CD4-positive, alpha-beta memory T cell (primary cell): ENCODE measurements at regions of chr16 and their contacts with region 1.

Region 1: GRCh38 chr16:58755989-58756649 is 22.0 kb upstream of the GOT2 start:
- DNase-seq: peak; percentile 75 to 85 (median 76)
- H3K4me3 ChIP-seq: peak overlapping the region in 1 of 2 donors; percentile 5
- H3K4me3 Mint-ChIP-seq: peak overlapping the region; percentile 22 to 81 (median 76)
- H3K27ac ChIP-seq: peak overlapping the region; percentile 25
- H3K27ac Mint-ChIP-seq: peak overlapping the region; percentile 63 to 95 (median 88)
- H3K4me1 ChIP-seq: peaks cover 8% of the 10 kb centered on the region
- H3K4me1 Mint-ChIP-seq: peaks cover 8 to 11% (median 10%) of the 10 kb centered on the region in 4 donors
- H3K27me3 ChIP-seq: no peaks in the 10 kb centered on the region
- H3K27me3 Mint-ChIP-seq: no peaks in the 10 kb centered on the region

Region 2: GRCh38 chr16:58025351-58026138 is 730.6 kb before region 1 on chr16 and contains the start of gene MMP15:
- CTCF ChIA-PET with region 1: no interaction called
- POLR2A ChIA-PET with region 1: no interaction called
- intact Hi-C with region 1: loop called (anchors 10 kb)
- DNase-seq: peak; percentile 50 to 77 (median 56)
- H3K4me3 ChIP-seq: peak within 1 kb of the TSS; percentile 11 to 53
- H3K4me3 Mint-ChIP-seq: peak within 1 kb of the TSS; percentile 89 to 99 (median 93)
- H3K27ac ChIP-seq: peak within 1 kb of the TSS; percentile 34
- H3K27ac Mint-ChIP-seq: peak within 1 kb of the TSS; percentile 81 to 93 (median 91)
- H3K4me1 ChIP-seq: peaks cover 19% of the 10 kb centered on the region
- H3K4me1 Mint-ChIP-seq: peaks cover 6 to 29% (median 18%) of the 10 kb centered on the region in 4 donors
- H3K27me3 ChIP-seq: no peaks in the 10 kb centered on the region
- H3K27me3 Mint-ChIP-seq: peaks cover 0 to 1% of the 10 kb centered on the region in 2 donors
- total RNA-seq, gene MMP15: 1.6 to 1.8 TPM

Region 3: DNA sequence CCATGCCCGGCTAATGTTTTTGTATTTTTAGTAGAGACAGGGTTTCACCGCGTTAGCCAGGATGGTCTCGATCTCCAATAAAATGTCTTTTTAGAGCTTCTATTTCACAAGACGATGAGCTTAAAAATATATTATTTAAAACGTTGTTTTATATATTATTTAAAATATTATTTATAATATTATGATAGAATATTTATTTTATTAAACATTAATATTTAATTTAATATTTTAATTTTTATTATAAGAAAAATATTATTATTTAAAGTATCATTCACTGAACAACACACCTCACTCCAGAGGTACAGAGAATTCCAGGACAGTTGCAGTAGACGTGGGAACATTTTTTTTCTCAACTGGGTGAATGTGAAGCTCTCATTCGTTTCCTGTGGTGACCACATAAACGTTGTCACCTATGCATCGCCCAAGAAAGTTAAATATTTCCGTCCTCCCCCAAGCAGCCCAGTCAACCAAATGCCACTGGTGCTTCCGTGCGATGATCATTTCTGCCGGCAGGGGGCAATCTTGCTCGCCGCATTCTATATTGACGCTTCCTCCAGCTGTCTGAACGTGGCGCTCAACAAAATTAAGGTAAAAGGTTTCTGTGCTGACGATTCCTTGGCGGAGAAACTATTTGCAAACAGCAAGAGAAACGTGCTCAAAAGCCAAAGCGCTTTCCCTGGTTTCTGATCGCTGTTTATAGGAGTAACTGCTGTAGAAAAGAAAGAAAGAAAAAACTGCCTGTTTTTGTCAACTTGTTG is 419.6 kb before region 1 on chr16:
- CTCF ChIA-PET with region 1: interaction called, 108 read pairs
- POLR2A ChIA-PET with region 1: interaction called, 7 read pairs
- intact Hi-C with region 1: loop called (anchors 1 kb)
- DNase-seq: peak; percentile 74 to 78 (median 75)
- H3K4me3 ChIP-seq: no peak overlapping the region
- H3K4me3 Mint-ChIP-seq: peak overlapping the region in 5 of 8 donors; percentile 24 to 74 (median 57)
- H3K27ac ChIP-seq: no peak overlapping the region
- H3K27ac Mint-ChIP-seq: no peak overlapping the region
- H3K4me1 ChIP-seq: no peaks in the 10 kb centered on the region
- H3K4me1 Mint-ChIP-seq: peaks cover 0 to 7% (median 6%) of the 10 kb centered on the region in 4 donors
- H3K27me3 ChIP-seq: no peaks in the 10 kb centered on the region
- H3K27me3 Mint-ChIP-seq: peaks cover 8 to 11% of the 10 kb centered on the region in 2 donors

Region 4: GRCh38 chr16:58487566-58488351 is 268.4 kb before region 1 on chr16:
- CTCF ChIA-PET with region 1: interaction called, 12 read pairs
- POLR2A ChIA-PET with region 1: no interaction called
- intact Hi-C with region 1: no loop called
- DNase-seq: peak; percentile 59 to 71 (median 62)
- H3K4me3 ChIP-seq: no peak overlapping the region
- H3K4me3 Mint-ChIP-seq: peak overlapping the region in 3 of 8 donors; percentile 20 to 39 (median 26)
- H3K27ac ChIP-seq: no peak overlapping the region
- H3K27ac Mint-ChIP-seq: no peak overlapping the region
- H3K4me1 ChIP-seq: no peaks in the 10 kb centered on the region
- H3K4me1 Mint-ChIP-seq: peaks cover 0 to 3% (median 0%) of the 10 kb centered on the region in 4 donors
- H3K27me3 ChIP-seq: no peaks in the 10 kb centered on the region
- H3K27me3 Mint-ChIP-seq: peaks cover 4 to 8% of the 10 kb centered on the region in 2 donors

Region 5: DNA sequence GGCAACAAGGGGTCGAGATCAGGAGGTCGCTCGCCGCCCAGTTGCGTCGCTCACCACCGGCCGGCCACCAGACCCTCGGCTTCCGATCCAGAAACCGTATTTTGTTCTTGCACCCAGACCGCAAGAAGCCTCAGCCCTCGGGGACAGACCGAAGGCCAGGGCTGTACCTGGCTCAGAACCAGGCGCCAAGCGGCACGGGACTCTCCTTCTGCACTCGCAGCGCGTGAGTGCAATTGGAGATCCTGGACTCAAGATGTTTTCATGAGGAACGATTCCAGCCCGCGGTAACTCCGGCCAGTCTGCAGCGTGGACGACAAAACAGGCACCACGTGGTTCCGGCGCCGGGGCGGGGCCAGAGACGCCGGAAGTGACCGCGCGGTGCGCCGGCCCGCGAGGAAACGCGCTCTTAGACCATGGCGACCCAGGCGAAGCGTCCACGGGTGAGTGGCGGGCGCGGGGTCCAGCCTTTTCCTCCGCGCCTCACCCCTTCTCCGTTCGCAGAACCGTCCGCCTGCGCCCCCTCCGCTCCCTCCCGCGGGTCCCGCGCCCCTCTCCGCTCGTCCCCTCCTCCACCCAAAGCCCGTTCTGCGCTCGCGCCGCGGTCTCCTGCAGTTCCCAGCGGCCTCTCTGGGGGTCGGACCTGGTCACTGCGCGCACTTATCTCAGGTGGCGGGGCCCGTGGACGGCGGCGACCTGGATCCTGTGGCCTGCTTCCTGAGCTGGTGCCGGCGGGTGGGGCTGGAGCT is 240.8 kb before region 1 on chr16 and contains the start of gene SETD6:
- CTCF ChIA-PET with region 1: interaction called, 120 read pairs
- POLR2A ChIA-PET with region 1: interaction called, 9 read pairs
- intact Hi-C with region 1: loop called (anchors 1 kb)
- DNase-seq: peak; percentile 54 to 69 (median 66)
- H3K4me3 ChIP-seq: peak within 1 kb of the TSS; percentile 42 to 89
- H3K4me3 Mint-ChIP-seq: peak within 1 kb of the TSS; percentile 85 to 92 (median 90)
- H3K27ac ChIP-seq: peak within 1 kb of the TSS; percentile 63
- H3K27ac Mint-ChIP-seq: peak within 1 kb of the TSS; percentile 79 to 94 (median 90)
- H3K4me1 ChIP-seq: peaks cover 12% of the 10 kb centered on the region
- H3K4me1 Mint-ChIP-seq: peaks cover 10 to 34% (median 20%) of the 10 kb centered on the region in 4 donors
- H3K27me3 ChIP-seq: no peaks in the 10 kb centered on the region
- H3K27me3 Mint-ChIP-seq: no peaks in the 10 kb centered on the region
- total RNA-seq, gene SETD6: 34.2 to 38.3 TPM

Region 6: DNA sequence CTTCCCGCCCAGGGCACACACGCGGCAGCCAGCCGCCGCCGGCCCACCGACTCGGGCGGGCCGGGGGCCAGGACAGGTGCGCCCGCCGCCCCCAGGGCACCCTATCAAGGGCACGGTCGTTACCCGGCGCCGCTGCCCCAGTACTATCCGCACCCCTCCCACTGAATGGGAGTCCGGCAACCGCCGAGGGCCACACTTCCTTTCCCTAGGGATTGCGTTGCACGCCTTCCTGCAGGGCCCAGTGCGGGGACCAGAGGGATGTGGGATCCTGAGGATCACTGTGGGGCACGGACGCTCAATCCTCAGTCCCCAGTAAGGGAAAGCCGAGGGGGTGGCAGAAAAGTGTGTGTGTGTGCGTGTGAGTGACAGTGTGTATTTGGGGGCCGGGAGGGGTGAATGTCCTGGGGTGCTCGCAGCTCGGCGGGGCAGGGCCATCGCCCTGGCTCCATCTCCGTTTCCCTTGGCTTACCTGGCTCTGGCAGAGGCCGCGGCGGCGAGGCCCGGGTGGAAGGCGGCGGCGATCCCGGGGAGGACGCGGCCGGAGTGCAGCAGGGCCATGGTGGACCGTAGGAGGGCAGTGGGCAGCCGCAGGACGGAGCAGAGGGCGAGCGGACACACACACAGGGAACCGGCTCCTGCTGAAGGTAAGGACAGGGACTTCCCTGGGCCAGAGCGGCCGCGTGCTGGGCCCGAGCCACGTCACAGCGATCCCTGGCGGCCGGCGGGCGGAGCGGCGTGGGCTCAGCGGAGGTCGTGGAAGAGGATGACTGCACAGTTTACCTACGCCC is 22.3 kb before region 1 on chr16 and contains the start of gene GOT2:
- CTCF ChIA-PET with region 1: interaction called, 16 read pairs
- POLR2A ChIA-PET with region 1: interaction called, 3 read pairs
- intact Hi-C with region 1: loop called (anchors 1 kb)
- DNase-seq: peak; percentile 70 to 81 (median 77)
- H3K4me3 ChIP-seq: peak within 1 kb of the TSS; percentile 85 to 86
- H3K4me3 Mint-ChIP-seq: peak within 1 kb of the TSS; percentile 94 to 99 (median 98)
- H3K27ac ChIP-seq: peak within 1 kb of the TSS; percentile 72
- H3K27ac Mint-ChIP-seq: peak within 1 kb of the TSS; percentile 57 to 97 (median 94)
- H3K4me1 ChIP-seq: peaks cover 37% of the 10 kb centered on the region
- H3K4me1 Mint-ChIP-seq: peaks cover 24 to 45% (median 35%) of the 10 kb centered on the region in 4 donors
- H3K27me3 ChIP-seq: no peaks in the 10 kb centered on the region
- H3K27me3 Mint-ChIP-seq: no peaks in the 10 kb centered on the region
- total RNA-seq, gene GOT2: 37.1 to 42.4 TPM

Region 7: DNA sequence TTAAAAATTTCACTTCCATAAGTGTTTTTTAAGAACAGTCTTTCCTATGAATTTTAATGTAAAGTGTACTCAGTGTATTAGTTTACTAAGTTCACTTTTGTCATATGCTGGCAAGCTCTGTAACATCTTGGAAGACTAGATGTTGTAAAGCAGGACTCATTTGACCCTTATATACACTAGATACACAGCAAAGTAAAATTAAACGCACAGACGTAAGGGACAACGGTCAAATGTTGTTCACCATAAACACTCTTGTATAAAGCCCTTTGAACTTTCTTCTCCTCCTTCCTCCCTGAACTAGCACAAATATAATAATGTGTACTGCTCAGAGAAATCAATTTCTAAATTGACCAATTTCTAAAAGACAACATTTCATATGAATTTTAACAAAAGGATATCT is 15.0 kb before region 1 on chr16:
- CTCF ChIA-PET with region 1: interaction called, 11 read pairs
- POLR2A ChIA-PET with region 1: no interaction called
- intact Hi-C with region 1: no loop called
- DNase-seq: no peak
- H3K4me3 ChIP-seq: no peak overlapping the region
- H3K4me3 Mint-ChIP-seq: no peak overlapping the region
- H3K27ac ChIP-seq: no peak overlapping the region
- H3K27ac Mint-ChIP-seq: no peak overlapping the region
- H3K4me1 ChIP-seq: no peaks in the 10 kb centered on the region
- H3K4me1 Mint-ChIP-seq: no peaks in the 10 kb centered on the region
- H3K27me3 ChIP-seq: no peaks in the 10 kb centered on the region
- H3K27me3 Mint-ChIP-seq: no peaks in the 10 kb centered on the region

Region 8: DNA sequence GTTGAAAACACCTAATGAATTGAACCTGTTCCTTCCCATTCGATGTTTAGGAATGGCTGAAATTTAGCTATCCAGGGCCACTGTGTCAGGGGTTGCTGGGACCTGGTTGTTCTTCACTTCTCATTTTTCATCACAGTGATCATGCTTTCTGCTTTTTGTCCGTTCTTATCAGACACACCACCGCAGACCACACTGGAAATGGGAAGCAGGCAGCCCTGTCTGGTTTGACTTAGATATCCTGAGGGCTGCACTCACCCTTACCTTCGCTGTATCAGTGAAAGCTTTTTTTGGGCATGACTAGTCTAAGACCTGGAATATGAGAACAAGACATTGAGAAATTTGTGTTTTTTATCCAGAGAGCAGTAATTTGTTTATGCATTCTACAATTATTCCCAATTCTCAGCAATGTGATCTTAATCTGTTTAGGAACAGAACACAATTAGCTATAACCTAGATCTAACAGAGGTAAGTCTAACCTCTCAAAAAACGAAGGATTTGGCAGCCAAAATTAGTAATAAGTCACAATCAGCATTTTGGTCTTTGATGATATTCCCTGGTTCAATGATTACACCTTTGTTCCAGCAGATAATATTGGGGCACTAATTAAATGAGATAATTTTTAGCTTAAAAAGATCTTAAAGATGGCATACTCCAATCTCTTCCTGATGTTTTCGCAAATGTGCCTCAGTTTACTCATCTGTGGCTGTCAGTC is 104.0 kb after region 1 on chr16:
- CTCF ChIA-PET with region 1: no interaction called
- POLR2A ChIA-PET with region 1: no interaction called
- intact Hi-C with region 1: no loop called
- DNase-seq: no peak
- H3K4me3 ChIP-seq: no peak overlapping the region
- H3K4me3 Mint-ChIP-seq: no peak overlapping the region
- H3K27ac ChIP-seq: no peak overlapping the region
- H3K27ac Mint-ChIP-seq: no peak overlapping the region
- H3K4me1 ChIP-seq: no peaks in the 10 kb centered on the region
- H3K4me1 Mint-ChIP-seq: no peaks in the 10 kb centered on the region
- H3K27me3 ChIP-seq: no peaks in the 10 kb centered on the region
- H3K27me3 Mint-ChIP-seq: peaks cover 5 to 11% of the 10 kb centered on the region in 2 donors

Region 9: GRCh38 chr16:59514636-59515035 is 758.5 kb after region 1 on chr16:
- CTCF ChIA-PET with region 1: no interaction called
- POLR2A ChIA-PET with region 1: no interaction called
- intact Hi-C with region 1: no loop called
- DNase-seq: no peak
- H3K4me3 ChIP-seq: no peak overlapping the region
- H3K4me3 Mint-ChIP-seq: no peak overlapping the region
- H3K27ac ChIP-seq: no peak overlapping the region
- H3K27ac Mint-ChIP-seq: no peak overlapping the region
- H3K4me1 ChIP-seq: no peaks in the 10 kb centered on the region
- H3K4me1 Mint-ChIP-seq: no peaks in the 10 kb centered on the region
- H3K27me3 ChIP-seq: no peaks in the 10 kb centered on the region
- H3K27me3 Mint-ChIP-seq: no peaks in the 10 kb centered on the region